HepG2 (cell line): ENCODE measurements at regions of chr9 and their contacts with region 1.

Region 1: GRCh38 chr9:127503947-127504782 is 52.9 kb downstream of the LRSAM1 start:
- DNase-seq: peak; percentile 70
- ATAC-seq: peak; percentile 84
- H3K4me3 ChIP-seq: no peak overlapping the region
- H3K27ac ChIP-seq: no peak overlapping the region
- H3K4me1 ChIP-seq: no peaks in the 10 kb centered on the region
- H3K27me3 ChIP-seq: no peaks in the 10 kb centered on the region
- CTCF ChIP-seq: peak; percentile 97
- EP300 ChIP-seq: no peak
- POLR2A ChIP-seq: no peak
- RAD21 ChIP-seq: peak; percentile 95

Region 2: GRCh38 chr9:127637322-127637847 is 133.2 kb after region 1 on chr9:
- CTCF ChIA-PET with region 1: no interaction called
- POLR2A ChIA-PET with region 1: no interaction called
- in situ Hi-C with region 1: no loop called
- intact Hi-C with region 1: no loop called
- DNase-seq: peak; percentile 38
- ATAC-seq: no peak
- H3K4me3 ChIP-seq: no peak overlapping the region
- H3K27ac ChIP-seq: no peak overlapping the region
- H3K4me1 ChIP-seq: peaks cover 38% of the 10 kb centered on the region
- H3K27me3 ChIP-seq: no peaks in the 10 kb centered on the region
- CTCF ChIP-seq: no peak
- EP300 ChIP-seq: no peak
- POLR2A ChIP-seq: no peak
- RAD21 ChIP-seq: no peak

Region 3: DNA sequence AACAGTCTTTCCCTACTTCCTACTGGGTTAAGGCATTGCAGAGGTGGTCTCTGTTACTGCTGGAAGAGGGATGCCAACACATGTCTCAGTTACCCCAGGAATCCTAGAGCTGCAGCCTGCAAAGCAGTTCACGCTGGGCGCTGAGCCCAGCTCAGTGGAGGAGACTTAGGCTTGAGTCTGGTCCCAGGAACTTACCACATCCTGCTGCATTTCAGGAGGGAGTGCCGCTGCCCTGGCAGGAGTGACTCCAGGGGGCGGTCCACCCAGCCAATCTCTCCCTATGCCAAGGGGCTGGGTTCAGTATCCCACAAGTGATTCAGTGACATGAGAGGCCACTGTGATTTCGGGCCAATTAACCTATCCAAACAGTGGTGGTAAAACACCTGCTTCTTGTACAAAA is 219.3 kb after region 1 on chr9:
- CTCF ChIA-PET with region 1: no interaction called
- POLR2A ChIA-PET with region 1: no interaction called
- in situ Hi-C with region 1: no loop called
- intact Hi-C with region 1: loop called (anchors 10 kb)
- DNase-seq: no peak
- ATAC-seq: no peak
- H3K4me3 ChIP-seq: no peak overlapping the region
- H3K27ac ChIP-seq: no peak overlapping the region
- H3K4me1 ChIP-seq: peaks cover 10% of the 10 kb centered on the region; the same call in 1 of the 2 replicates
- H3K27me3 ChIP-seq: peaks cover 0 to 2% of the 10 kb centered on the region in 2 experiments; a peak in 1 of 5 replicates
- CTCF ChIP-seq: no peak
- EP300 ChIP-seq: no peak
- POLR2A ChIP-seq: no peak
- RAD21 ChIP-seq: no peak